ENCODE measurements at regions of chr10 and their contacts with region 1.

Region 1: DNA sequence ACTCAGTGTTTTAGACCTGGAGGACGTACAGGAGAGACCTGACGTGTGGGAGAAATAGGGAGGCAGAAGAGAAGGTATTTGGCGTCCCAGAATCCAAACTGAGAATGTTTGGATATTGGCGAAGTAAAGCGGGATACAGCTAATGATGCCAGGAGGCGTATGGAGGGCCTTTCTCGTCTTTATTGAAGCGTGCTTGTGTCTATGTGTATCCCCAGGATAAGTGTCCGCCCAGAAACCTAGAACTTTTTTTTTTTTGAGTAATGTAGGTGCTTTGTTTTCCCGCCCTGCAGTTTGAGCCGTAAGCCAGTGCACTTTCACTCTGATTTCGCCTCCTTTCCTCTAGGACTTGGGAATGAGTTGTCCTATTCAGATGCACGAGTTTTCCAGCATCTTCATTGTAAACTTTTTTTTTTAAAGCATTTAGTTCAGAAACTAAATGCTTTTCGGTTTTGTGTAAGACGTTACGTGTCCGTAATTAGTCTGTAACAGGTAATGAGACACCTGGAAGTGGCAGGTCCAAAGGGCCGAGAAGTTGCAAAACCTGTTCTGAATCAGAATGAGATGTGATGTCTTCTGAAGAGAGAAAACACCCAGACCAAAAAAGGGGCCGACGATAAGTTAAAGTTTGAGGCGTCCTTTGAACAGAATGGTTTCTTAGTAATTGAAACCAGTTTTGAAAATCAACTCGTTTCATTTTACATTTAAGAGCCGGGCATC is 746 bp downstream of the ARL5B start:
- DNase-seq: peak; percentile 57
- H3K4me3 Mint-ChIP-seq: peak overlapping the region; percentile 85
- H3K27ac Mint-ChIP-seq: peak overlapping the region; percentile 82
- H3K4me1 Mint-ChIP-seq: peaks cover 18% of the 10 kb centered on the region
- H3K27me3 Mint-ChIP-seq: no peaks in the 10 kb centered on the region
- CTCF ChIP-seq: no peak

Region 2: DNA sequence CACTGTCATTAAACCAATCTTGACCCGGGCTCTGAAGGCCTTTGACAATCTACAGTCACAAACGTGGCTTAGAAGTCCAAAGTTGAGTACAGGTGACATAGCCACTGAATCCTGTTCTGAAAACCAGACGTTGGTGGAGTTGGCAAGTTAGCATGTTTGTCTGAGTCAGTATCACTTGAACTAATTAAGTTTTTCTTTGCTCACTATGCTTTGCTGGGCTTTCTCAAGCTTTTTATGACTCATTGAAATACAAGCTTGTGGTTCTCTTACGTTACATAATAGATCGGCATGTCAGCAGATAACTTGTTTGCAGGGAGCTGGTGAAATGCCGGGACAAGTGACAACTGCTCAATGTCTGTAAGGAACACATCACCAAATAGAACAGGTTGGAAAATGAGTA is 53.1 kb after region 1 on chr10:
- CTCF ChIA-PET with region 1: no interaction called
- intact Hi-C with region 1: loop called (anchors 10 kb)
- DNase-seq: peak; percentile 40
- H3K4me3 Mint-ChIP-seq: no peak overlapping the region
- H3K27ac Mint-ChIP-seq: peak overlapping the region; percentile 64
- H3K4me1 Mint-ChIP-seq: peaks cover 13% of the 10 kb centered on the region
- H3K27me3 Mint-ChIP-seq: no peaks in the 10 kb centered on the region
- CTCF ChIP-seq: no peak

Measured in Calu3 (cell line).